ENCODE measurements at regions of chr2 and their contacts with region 1.

Region 1: DNA sequence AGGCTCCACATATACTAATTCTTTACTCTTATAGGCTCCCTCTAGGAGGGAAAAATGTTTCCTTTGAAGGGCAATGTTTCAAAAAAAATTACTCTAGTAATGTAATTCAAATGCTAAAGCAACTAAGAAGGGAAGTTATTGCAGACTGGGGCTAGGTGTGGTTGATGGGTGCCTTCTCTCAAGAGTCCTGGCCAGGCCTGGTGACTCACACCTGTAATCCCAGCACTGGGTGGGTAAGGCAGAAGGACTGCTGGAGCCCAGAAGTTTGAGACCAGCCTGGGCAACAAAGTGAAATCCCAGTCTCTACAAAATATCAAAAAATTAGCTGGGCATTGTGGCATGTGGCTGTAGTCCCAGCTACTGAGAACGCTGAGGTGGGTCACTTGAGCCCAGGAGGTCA is 31.2 kb upstream of the CDKL4 start:
- DNase-seq: no peak
- ATAC-seq: peak; percentile 59
- H3K4me3 ChIP-seq: no peak overlapping the region
- H3K27ac ChIP-seq: no peak overlapping the region
- H3K4me1 ChIP-seq: no peaks in the 10 kb centered on the region
- H3K27me3 ChIP-seq: no peaks in the 10 kb centered on the region
- CTCF ChIP-seq: no peak
- EP300 ChIP-seq: no peak
- POLR2A ChIP-seq: no peak
- RAD21 ChIP-seq: no peak

Region 2: DNA sequence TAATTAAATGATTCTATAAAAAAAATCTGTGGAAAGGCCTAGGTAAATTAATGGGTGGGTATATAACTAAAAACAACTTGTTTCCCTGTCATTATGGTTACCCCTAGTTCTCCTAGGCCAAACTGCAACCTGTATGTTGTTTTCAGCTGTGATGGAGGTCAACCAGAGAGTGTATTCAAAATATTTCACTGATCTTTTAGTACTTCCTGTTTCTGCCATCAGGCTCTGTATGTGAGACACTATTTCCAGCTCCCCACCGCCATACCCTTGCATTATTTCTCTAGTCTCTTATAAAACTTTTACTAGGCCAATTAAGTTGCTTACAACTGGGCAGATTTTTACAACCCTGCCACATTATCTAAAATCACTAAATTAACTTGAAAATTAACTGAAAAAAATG is 10.3 kb before region 1 on chr2:
- CTCF ChIA-PET with region 1: no interaction called
- POLR2A ChIA-PET with region 1: no interaction called
- in situ Hi-C with region 1: no loop called
- intact Hi-C with region 1: loop called (anchors 1 kb)
- DNase-seq: no peak
- ATAC-seq: no peak
- H3K4me3 ChIP-seq: no peak overlapping the region
- H3K27ac ChIP-seq: no peak overlapping the region
- H3K4me1 ChIP-seq: no peaks in the 10 kb centered on the region
- H3K27me3 ChIP-seq: no peaks in the 10 kb centered on the region
- CTCF ChIP-seq: no peak
- EP300 ChIP-seq: no peak
- POLR2A ChIP-seq: no peak
- RAD21 ChIP-seq: no peak

Measured in HepG2 (cell line).